ENCODE measurements at regions of chr7 and their contacts with region 1.

Region 1: GRCh38 chr7:120987683-120988590 is 574 bp upstream of the CPED1 start:
- DNase-seq: peak; percentile 74 to 91 (median 78)
- H3K4me3 ChIP-seq: peak overlapping the region; percentile 10
- H3K4me3 Mint-ChIP-seq: peak overlapping the region in 6 of 7 donors; percentile 60 to 80 (median 76)
- H3K27ac ChIP-seq: peak overlapping the region; percentile 49
- H3K27ac Mint-ChIP-seq: peak overlapping the region in 1 of 8 donors; percentile 65
- H3K4me1 ChIP-seq: peaks cover 14% of the 10 kb centered on the region
- H3K4me1 Mint-ChIP-seq: peaks cover 12 to 19% (median 18%) of the 10 kb centered on the region in 3 donors
- H3K27me3 ChIP-seq: peaks cover 27% of the 10 kb centered on the region
- H3K27me3 Mint-ChIP-seq: peaks cover 30 to 85% of the 10 kb centered on the region in 2 donors

Region 2: GRCh38 chr7:120877701-120878100 is 110.2 kb before region 1 on chr7:
- CTCF ChIA-PET with region 1: no interaction called
- POLR2A ChIA-PET with region 1: no interaction called
- DNase-seq: no peak
- H3K4me3 ChIP-seq: no peak overlapping the region
- H3K4me3 Mint-ChIP-seq: no peak overlapping the region
- H3K27ac ChIP-seq: no peak overlapping the region
- H3K27ac Mint-ChIP-seq: no peak overlapping the region
- H3K4me1 ChIP-seq: no peaks in the 10 kb centered on the region
- H3K4me1 Mint-ChIP-seq: no peaks in the 10 kb centered on the region
- H3K27me3 ChIP-seq: no peaks in the 10 kb centered on the region
- H3K27me3 Mint-ChIP-seq: peaks cover 8 to 21% of the 10 kb centered on the region in 2 donors

Region 3: GRCh38 chr7:120950539-120951308 is 37.2 kb before region 1 on chr7 and contains the start of gene ING3:
- CTCF ChIA-PET with region 1: interaction called, 4 read pairs
- POLR2A ChIA-PET with region 1: interaction called, 10 read pairs
- DNase-seq: peak; percentile 96 to 99 (median 98)
- H3K4me3 ChIP-seq: peak within 1 kb of the TSS; percentile 95
- H3K4me3 Mint-ChIP-seq: peak within 1 kb of the TSS; percentile 90 to 99 (median 97)
- H3K27ac ChIP-seq: peak within 1 kb of the TSS; percentile 94
- H3K27ac Mint-ChIP-seq: peak within 1 kb of the TSS; percentile 97 to 100 (median 99)
- H3K4me1 ChIP-seq: peaks cover 15% of the 10 kb centered on the region
- H3K4me1 Mint-ChIP-seq: peaks cover 24 to 40% (median 31%) of the 10 kb centered on the region in 3 donors
- H3K27me3 ChIP-seq: no peaks in the 10 kb centered on the region
- H3K27me3 Mint-ChIP-seq: peaks cover 12 to 14% of the 10 kb centered on the region in 2 donors
- total RNA-seq, gene ING3: 24.4 to 30.7 TPM

Region 4: GRCh38 chr7:121081327-121081936 is 93.5 kb after region 1 on chr7:
- CTCF ChIA-PET with region 1: interaction called, 37 read pairs
- POLR2A ChIA-PET with region 1: no interaction called
- DNase-seq: peak in 2 of 5 donors; percentile 14 to 42
- H3K4me3 ChIP-seq: no peak overlapping the region
- H3K4me3 Mint-ChIP-seq: no peak overlapping the region
- H3K27ac ChIP-seq: no peak overlapping the region
- H3K27ac Mint-ChIP-seq: no peak overlapping the region
- H3K4me1 ChIP-seq: no peaks in the 10 kb centered on the region
- H3K4me1 Mint-ChIP-seq: no peaks in the 10 kb centered on the region
- H3K27me3 ChIP-seq: no peaks in the 10 kb centered on the region
- H3K27me3 Mint-ChIP-seq: peaks cover 9 to 33% of the 10 kb centered on the region in 2 donors

Measured in CD8-positive, alpha-beta memory T cell (primary cell).